K562 (cell line): ENCODE measurements at regions of chr13 and their contacts with region 1.

Region 1: DNA sequence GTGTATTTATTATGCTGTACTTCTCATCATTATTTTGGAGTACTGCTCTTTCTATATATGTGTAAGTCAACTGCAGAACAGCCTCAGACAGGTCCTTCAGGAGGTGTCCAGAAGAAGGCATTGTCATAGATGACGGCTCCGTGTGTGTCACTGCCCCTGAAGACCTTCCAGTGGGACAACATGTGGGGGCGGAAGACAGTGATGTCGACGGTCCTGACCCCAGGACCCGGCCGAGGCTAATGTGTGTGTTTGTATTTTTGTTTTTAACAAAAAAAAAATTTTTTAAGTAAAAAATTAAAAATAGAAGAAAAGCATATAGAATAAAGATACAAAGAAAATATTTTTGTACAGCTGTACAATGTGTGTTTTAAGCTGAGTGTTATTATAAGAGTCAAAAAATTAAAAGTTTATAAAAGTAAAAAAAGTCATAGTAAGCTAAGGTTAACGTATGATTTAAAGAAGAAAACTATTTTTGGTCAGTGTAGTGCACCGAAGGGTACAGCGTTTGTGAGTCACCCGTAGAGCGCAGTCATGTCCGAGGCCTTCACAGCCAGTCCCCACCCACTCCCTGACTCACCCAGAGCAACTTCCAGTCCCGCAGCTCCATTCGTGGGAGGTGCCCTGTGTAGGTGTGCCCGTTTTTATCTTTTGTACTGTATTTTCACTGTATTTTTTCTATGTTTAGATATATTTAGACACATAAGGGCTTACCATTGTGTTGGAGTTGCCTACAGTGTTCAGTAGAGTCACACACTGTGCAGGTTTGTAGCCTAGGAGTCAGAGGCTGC is 42.2 kb upstream of the SPACA7 start:
- DNase-seq: peak; percentile 14 to 46 (median 26)
- ATAC-seq: peak; percentile 92
- H3K4me3 ChIP-seq: no peak overlapping the region
- H3K27ac ChIP-seq: no peak overlapping the region
- H3K4me1 ChIP-seq: peaks cover 0 to 4% of the 10 kb centered on the region in 2 experiments; a peak in 1 of 5 replicates
- H3K27me3 ChIP-seq: peaks cover 5 to 36% of the 10 kb centered on the region in 2 experiments; a peak in 3 of 5 replicates
- CTCF ChIP-seq: no peak
- EP300 ChIP-seq: no peak
- POLR2A ChIP-seq: no peak
- RAD21 ChIP-seq: no peak

Region 2: GRCh38 chr13:112066624-112067004 is 267.3 kb before region 1 on chr13:
- CTCF ChIA-PET with region 1: no interaction called
- POLR2A ChIA-PET with region 1: no interaction called
- in situ Hi-C with region 1: no loop called
- intact Hi-C with region 1: loop called (anchors 10 kb)
- DNase-seq: no peak
- ATAC-seq: no peak
- H3K4me3 ChIP-seq: no peak overlapping the region
- H3K27ac ChIP-seq: no peak overlapping the region
- H3K4me1 ChIP-seq: no peaks in the 10 kb centered on the region
- H3K27me3 ChIP-seq: peaks cover 0 to 18% of the 10 kb centered on the region in 2 experiments; a peak in 3 of 5 replicates
- CTCF ChIP-seq: no peak
- EP300 ChIP-seq: no peak
- POLR2A ChIP-seq: no peak
- RAD21 ChIP-seq: no peak